CD4-positive, alpha-beta memory T cell (primary cell): ENCODE measurements at regions of chr1 and their contacts with region 1.

Region 1: GRCh38 chr1:201170533-201171062 is 16.3 kb upstream of the TMEM9 start:
- DNase-seq: peak; percentile 63 to 82 (median 65)
- H3K4me3 ChIP-seq: peak overlapping the region; percentile 43 to 72
- H3K4me3 Mint-ChIP-seq: peak overlapping the region; percentile 85 to 96 (median 90)
- H3K27ac ChIP-seq: peak overlapping the region; percentile 52
- H3K27ac Mint-ChIP-seq: peak overlapping the region in 6 of 7 donors; percentile 74 to 91 (median 84)
- H3K4me1 ChIP-seq: peaks cover 8% of the 10 kb centered on the region
- H3K4me1 Mint-ChIP-seq: peaks cover 3 to 19% (median 10%) of the 10 kb centered on the region in 4 donors
- H3K27me3 ChIP-seq: no peaks in the 10 kb centered on the region
- H3K27me3 Mint-ChIP-seq: peaks cover 2 to 3% of the 10 kb centered on the region in 2 donors

Region 2: DNA sequence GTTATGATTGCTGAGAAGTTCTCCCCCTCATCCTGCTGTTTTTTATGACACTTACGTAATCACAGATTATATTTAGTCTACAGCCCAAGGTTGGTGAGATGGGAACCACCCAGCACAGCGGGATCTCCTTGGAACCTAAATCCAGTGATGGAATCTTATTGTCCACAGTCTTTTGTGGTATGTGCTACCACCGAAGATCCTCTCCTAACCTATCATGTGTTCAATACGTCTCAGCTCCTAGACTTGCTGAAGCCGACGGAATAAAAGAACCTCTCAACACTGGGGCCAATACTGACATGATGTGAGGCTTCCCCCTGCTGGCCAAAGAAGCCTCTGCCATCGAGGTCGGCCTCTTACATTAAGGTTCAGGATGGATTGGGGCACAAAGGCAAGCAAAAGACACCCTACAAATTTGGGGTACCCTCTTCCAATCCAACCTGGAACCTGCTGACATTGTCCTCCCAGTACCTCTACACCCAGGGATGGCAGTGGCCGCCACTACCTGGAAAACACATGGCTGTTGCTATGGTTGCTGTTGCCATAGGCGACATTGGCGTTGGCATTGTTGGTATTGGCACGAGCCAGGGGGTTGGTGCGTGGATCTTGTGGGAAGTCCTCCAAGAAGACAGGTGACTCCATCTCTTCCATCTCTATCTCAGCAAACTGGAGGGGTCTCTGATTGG is 127.7 kb before region 1 on chr1:
- CTCF ChIA-PET with region 1: no interaction called
- POLR2A ChIA-PET with region 1: no interaction called
- intact Hi-C with region 1: no loop called
- DNase-seq: peak; percentile 67 to 74 (median 72)
- H3K4me3 ChIP-seq: no peak overlapping the region
- H3K4me3 Mint-ChIP-seq: no peak overlapping the region
- H3K27ac ChIP-seq: no peak overlapping the region
- H3K27ac Mint-ChIP-seq: peak overlapping the region in 2 of 7 donors; percentile 37 to 77
- H3K4me1 ChIP-seq: no peaks in the 10 kb centered on the region
- H3K4me1 Mint-ChIP-seq: peaks cover 0 to 3% (median 3%) of the 10 kb centered on the region in 4 donors
- H3K27me3 ChIP-seq: no peaks in the 10 kb centered on the region
- H3K27me3 Mint-ChIP-seq: peaks cover 0 to 3% of the 10 kb centered on the region in 2 donors

Region 3: GRCh38 chr1:201154389-201155165 is 16.0 kb before region 1 on chr1 and contains the start of gene TMEM9:
- CTCF ChIA-PET with region 1: interaction called, 9 read pairs
- POLR2A ChIA-PET with region 1: interaction called, 7 read pairs
- intact Hi-C with region 1: loop called (anchors 1 kb)
- DNase-seq: peak; percentile 95 to 98 (median 96)
- H3K4me3 ChIP-seq: peak within 1 kb of the TSS; percentile 64 to 73
- H3K4me3 Mint-ChIP-seq: peak within 1 kb of the TSS; percentile 88 to 96 (median 92)
- H3K27ac ChIP-seq: peak within 1 kb of the TSS; percentile 48
- H3K27ac Mint-ChIP-seq: peak within 1 kb of the TSS; percentile 89 to 94 (median 94)
- H3K4me1 ChIP-seq: peaks cover 21% of the 10 kb centered on the region
- H3K4me1 Mint-ChIP-seq: peaks cover 18 to 33% (median 22%) of the 10 kb centered on the region in 4 donors
- H3K27me3 ChIP-seq: no peaks in the 10 kb centered on the region
- H3K27me3 Mint-ChIP-seq: peaks cover 6 to 18% of the 10 kb centered on the region in 2 donors
- total RNA-seq, gene TMEM9: 20.6 to 21.1 TPM

Region 4: GRCh38 chr1:201807958-201808632 is 637.5 kb after region 1 on chr1:
- CTCF ChIA-PET with region 1: no interaction called
- POLR2A ChIA-PET with region 1: no interaction called
- intact Hi-C with region 1: no loop called
- DNase-seq: no peak
- H3K4me3 ChIP-seq: no peak overlapping the region
- H3K4me3 Mint-ChIP-seq: no peak overlapping the region
- H3K27ac ChIP-seq: no peak overlapping the region
- H3K27ac Mint-ChIP-seq: no peak overlapping the region
- H3K4me1 ChIP-seq: no peaks in the 10 kb centered on the region
- H3K4me1 Mint-ChIP-seq: no peaks in the 10 kb centered on the region
- H3K27me3 ChIP-seq: no peaks in the 10 kb centered on the region
- H3K27me3 Mint-ChIP-seq: peaks cover 0 to 1% of the 10 kb centered on the region in 2 donors